Sigmoid colon (tissue), 7 donors: ENCODE measurements at regions of chr12 and their contacts with region 1.

Region 1: GRCh38 chr12:116277393-116278278 is at the start of gene MED13L:
- DNase-seq: peak; percentile 94
- H3K4me3 ChIP-seq: peak within 1 kb of the TSS; percentile 74 to 83 (median 79)
- H3K27ac ChIP-seq: peak within 1 kb of the TSS; percentile 92 to 98 (median 96)
- H3K4me1 ChIP-seq: peaks cover 0 to 40% (median 28%) of the 10 kb centered on the region in 4 donors
- H3K27me3 ChIP-seq: no peaks in the 10 kb centered on the region
- CTCF ChIP-seq: peak in 1 of 4 experiments; percentile 39
- EP300 ChIP-seq: no peak
- POLR2A ChIP-seq: no peak
- total RNA-seq, gene MED13L: 151 to 246 (median 213) TPM

Region 2: GRCh38 chr12:116319898-116320621 is 42.4 kb after region 1 on chr12:
- intact Hi-C with region 1: loop called (anchors 1 kb)
- DNase-seq: peak; percentile 96
- H3K4me3 ChIP-seq: peak overlapping the region in 2 of 4 donors; percentile 13 to 15
- H3K27ac ChIP-seq: peak overlapping the region; percentile 82 to 90 (median 88)
- H3K4me1 ChIP-seq: peaks cover 3 to 33% (median 30%) of the 10 kb centered on the region in 4 donors
- H3K27me3 ChIP-seq: no peaks in the 10 kb centered on the region
- CTCF ChIP-seq: no peak
- EP300 ChIP-seq: peak; percentile 86 to 97 (median 94)
- POLR2A ChIP-seq: no peak

Region 3: DNA sequence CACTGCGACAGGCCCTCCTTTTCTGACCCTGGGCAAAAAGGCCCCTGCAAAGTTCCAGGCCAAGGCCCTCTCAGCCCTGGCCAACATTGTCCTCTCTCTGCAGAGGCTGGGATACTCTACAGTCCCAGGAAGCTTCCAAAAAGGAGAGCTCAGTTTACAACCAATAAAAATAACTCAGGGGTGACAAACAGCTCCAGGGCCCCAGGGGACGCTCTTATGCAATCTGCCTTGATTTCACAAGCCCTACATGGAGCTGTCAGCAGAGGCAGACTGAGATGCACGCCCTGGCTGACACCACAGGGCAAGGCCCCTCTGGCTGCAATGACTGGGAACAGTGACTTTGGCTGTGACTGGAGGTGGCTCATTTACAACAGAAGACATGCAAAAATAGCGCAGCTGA is 128.9 kb after region 1 on chr12:
- intact Hi-C with region 1: loop called (anchors 5 kb)
- DNase-seq: peak; percentile 95
- H3K4me3 ChIP-seq: no peak overlapping the region
- H3K27ac ChIP-seq: no peak overlapping the region
- H3K4me1 ChIP-seq: peaks cover 0 to 31% (median 8%) of the 10 kb centered on the region in 4 donors
- H3K27me3 ChIP-seq: no peaks in the 10 kb centered on the region
- CTCF ChIP-seq: no peak
- EP300 ChIP-seq: peak in 2 of 4 donors; percentile 35 to 38
- POLR2A ChIP-seq: no peak

Region 4: GRCh38 chr12:116533343-116534251 is 256.0 kb after region 1 on chr12:
- intact Hi-C with region 1: loop called (anchors 5 kb)
- DNase-seq: peak; percentile 93
- H3K4me3 ChIP-seq: peak overlapping the region; percentile 42 to 61 (median 52)
- H3K27ac ChIP-seq: peak overlapping the region; percentile 83 to 89 (median 84)
- H3K4me1 ChIP-seq: peaks cover 0 to 30% (median 28%) of the 10 kb centered on the region in 4 donors
- H3K27me3 ChIP-seq: no peaks in the 10 kb centered on the region
- CTCF ChIP-seq: no peak
- EP300 ChIP-seq: peak in 1 of 4 donors; percentile 22
- POLR2A ChIP-seq: no peak